ENCODE measurements at regions of chr1 and their contacts with region 1.

Region 1: DNA sequence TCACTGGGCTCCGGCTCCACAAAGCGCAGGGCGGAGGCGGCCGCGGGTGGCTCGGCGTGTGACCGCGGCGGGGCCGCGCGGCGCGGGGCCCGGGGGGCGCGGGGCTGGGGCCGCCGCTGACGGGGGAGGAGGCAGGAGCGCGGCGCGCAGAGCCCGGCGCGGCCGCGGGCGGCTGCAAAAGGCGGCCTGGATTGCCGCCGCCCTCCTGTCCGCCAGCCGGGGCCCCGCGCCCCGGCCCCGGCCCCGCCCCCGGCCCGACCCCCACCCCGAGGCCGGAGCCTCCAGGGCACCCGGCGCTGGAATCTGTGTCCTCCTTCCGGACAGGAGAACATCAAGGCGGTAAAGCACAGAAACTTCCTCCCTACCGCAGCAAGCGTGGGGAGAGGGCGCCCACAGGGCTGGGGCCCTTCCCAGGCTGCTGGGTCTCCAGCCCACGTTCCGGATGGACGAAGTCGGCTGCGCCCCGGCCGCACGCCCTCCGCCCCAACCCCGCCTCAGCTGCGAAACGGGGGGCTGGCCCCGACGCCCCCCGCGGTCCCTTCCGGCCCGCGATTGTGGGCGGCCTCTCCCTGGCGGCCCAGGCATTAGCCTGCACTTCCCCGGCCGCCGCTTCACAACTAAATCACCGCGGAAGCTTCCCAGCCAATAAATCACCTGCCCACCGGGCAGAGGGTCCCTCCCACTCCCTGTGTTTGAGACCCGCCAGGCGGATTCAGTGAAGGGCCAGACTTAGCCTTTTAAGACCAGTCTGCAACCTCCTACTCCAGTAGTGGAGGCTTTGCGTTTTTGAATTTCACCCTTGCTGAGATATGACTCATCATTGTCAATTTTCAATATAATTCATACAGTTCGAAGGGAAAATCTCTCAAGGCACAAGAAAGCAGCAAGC is 106.0 kb downstream of the SLC45A1 start:
- DNase-seq: peak; percentile 43
- H3K4me3 Mint-ChIP-seq: peak overlapping the region; percentile 84
- H3K27ac Mint-ChIP-seq: peak overlapping the region; percentile 92
- H3K4me1 Mint-ChIP-seq: peaks cover 43% of the 10 kb centered on the region
- H3K27me3 Mint-ChIP-seq: no peaks in the 10 kb centered on the region

Region 2: GRCh38 chr1:8396786-8397406 is 27.0 kb before region 1 on chr1:
- intact Hi-C with region 1: loop called (anchors 2 kb)
- DNase-seq: no peak
- H3K4me3 Mint-ChIP-seq: peak overlapping the region; percentile 10
- H3K27ac Mint-ChIP-seq: peak overlapping the region; percentile 64
- H3K4me1 Mint-ChIP-seq: peaks cover 63% of the 10 kb centered on the region
- H3K27me3 Mint-ChIP-seq: no peaks in the 10 kb centered on the region

Region 3: GRCh38 chr1:8439015-8439702 is 15.3 kb after region 1 on chr1:
- intact Hi-C with region 1: no loop called
- DNase-seq: no peak
- H3K4me3 Mint-ChIP-seq: no peak overlapping the region
- H3K27ac Mint-ChIP-seq: no peak overlapping the region
- H3K4me1 Mint-ChIP-seq: peaks cover 11% of the 10 kb centered on the region
- H3K27me3 Mint-ChIP-seq: no peaks in the 10 kb centered on the region

Region 4: DNA sequence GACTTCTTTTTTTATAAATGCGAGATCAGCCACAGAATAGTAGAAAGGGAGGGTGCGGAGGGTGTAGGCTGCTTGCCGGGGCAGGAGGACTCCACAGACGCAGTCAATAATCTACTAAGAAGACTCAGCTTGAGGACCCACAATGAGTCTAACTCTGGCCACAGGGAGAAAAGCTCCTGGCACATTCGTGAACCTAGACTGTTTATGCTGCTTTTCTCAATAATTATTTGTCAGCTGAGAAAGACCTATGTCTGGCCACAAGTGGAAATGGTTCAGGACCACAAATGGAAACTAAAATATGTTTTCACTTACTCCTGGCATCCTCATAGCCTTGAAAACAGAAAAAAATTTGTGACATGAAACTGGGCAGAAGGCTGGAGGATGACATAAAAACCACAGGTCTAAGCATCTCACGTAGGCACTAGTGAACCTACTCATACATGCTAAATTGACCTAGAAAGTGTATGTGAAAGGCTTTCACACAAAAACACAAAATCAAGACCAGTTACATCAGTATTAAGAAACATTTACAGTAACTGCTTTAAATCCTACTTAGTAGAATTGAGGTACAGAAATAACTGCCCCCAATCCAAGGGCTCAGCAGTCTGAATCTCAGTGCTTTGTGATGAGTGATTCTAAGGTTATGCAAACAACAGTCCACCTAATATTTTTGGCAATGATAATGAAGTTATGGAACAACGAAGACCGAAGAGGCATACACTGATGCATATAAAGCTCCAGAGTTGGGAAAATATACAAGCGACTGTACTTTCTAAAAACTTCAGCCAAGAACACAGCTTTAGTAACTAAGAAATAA is 53.5 kb after region 1 on chr1:
- intact Hi-C with region 1: loop called (anchors 1 kb)
- DNase-seq: no peak
- H3K4me3 Mint-ChIP-seq: peak overlapping the region; percentile 47
- H3K27ac Mint-ChIP-seq: peak overlapping the region; percentile 88
- H3K4me1 Mint-ChIP-seq: peaks cover 62% of the 10 kb centered on the region
- H3K27me3 Mint-ChIP-seq: no peaks in the 10 kb centered on the region

Region 5: DNA sequence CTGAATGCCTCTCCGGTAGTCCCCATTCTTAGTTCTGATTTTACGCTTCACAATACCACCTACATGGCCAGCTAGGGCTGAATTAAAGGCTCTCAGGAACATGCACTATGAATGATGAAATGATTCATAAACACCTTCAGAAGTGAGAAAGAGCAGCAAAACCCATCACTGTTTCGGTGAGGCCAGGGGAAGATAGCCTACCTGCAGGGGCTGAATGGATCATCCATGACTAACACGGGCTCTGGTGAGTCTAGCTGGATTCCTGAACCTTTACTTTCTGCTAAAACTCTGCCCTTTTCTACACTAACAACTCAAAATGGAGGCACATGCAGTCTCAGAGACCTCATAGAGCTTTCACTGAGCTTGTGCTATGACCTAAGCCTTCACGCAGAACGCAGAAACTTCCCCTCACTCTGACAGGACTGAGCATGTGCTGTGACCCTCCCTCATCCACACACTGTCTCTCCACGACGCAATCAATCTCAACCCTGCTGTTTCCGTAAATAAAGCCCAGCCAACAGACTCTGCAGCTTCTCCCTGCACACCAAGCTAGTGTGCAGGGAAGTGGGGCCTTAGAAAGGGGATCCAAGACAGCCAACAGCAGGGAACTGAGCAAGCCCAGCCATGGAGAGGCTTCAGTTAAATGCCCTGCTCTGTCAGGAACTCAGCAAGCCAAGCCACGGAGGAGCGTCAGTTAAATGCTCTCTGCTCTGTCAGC is 101.8 kb after region 1 on chr1:
- intact Hi-C with region 1: loop called (anchors 1 kb)
- DNase-seq: peak; percentile 65
- H3K4me3 Mint-ChIP-seq: no peak overlapping the region
- H3K27ac Mint-ChIP-seq: no peak overlapping the region
- H3K4me1 Mint-ChIP-seq: peaks cover 38% of the 10 kb centered on the region
- H3K27me3 Mint-ChIP-seq: no peaks in the 10 kb centered on the region

Region 6: DNA sequence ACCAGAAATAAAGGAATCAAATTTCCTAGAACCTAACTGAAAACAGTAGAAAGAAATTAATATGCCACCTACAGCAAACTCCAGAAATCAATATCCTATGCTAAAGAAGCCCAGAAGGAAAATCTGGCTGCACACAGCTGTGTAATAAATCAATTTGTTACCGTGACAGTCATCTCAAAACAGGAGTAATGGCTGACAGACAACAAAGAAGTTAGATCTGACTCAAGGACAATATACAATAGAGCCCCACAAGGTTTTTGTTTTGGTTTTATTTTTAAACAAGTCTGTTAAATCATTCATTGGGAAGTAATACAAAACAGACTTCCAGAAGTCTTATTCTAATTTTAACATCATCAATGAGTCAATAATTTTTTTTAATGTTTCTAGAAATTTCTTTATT is 225.1 kb after region 1 on chr1:
- intact Hi-C with region 1: loop called (anchors 5 kb)
- DNase-seq: no peak
- H3K4me3 Mint-ChIP-seq: no peak overlapping the region
- H3K27ac Mint-ChIP-seq: peak overlapping the region; percentile 46
- H3K4me1 Mint-ChIP-seq: peaks cover 61% of the 10 kb centered on the region
- H3K27me3 Mint-ChIP-seq: no peaks in the 10 kb centered on the region

Measured in activated T-helper 2 cell treated with anti-CD3 and anti-CD28 coated beads, Interferon-gamma antibody, Interleukin-2, Interleukin-4, amounts not matched to agents 10 μg/mL and 5 μg/mL and 100 μg/mL, durations not matched to agents 14 hours and 24 hours and 36 hours (primary cell).